Left cardiac atrium (tissue), 4 donors: ENCODE measurements at regions of chr21 and their contacts with region 1.

Region 1: GRCh38 chr21:34579411-34579810 is 35.5 kb downstream of the RCAN1 start:
- DNase-seq: no peak
- ATAC-seq: no peak

Region 2: DNA sequence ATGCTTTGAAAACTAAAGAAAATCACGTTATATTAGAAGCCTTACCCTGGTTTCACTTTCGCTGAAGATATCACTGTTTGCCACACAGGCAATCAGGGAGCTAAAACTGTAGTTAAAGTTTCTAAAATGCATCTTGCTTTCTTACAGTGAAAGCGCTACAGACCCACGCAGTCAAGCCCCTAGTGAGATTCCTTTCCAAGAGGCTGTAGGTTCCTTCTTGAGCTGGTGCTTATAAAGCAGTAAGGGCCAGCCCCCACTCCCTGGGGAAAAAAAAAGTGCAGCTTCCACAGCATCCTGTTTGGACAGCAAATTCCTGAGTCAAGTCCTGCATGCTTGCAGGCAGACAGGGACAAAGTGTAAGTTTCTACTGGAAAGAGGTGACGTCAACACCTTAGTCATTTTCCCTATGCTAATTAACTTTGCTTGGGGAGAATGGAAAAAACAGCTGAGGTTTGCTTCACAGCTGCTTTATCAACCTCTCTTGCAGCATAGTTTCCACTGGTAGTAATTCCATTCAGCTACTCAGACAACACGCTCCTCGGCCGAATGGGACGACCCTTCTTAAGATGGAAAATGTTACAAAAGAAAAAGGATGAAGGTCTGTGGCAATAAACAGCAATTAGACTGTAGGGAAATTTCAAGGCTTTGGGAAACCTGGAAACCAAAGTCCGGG is 52.7 kb before region 1 on chr21:
- intact Hi-C with region 1: loop called in 1 of 2 experiments (anchors 5 kb)
- DNase-seq: peak; percentile 84
- ATAC-seq: peak; percentile 86 to 94

Region 3: GRCh38 chr21:34536820-34537219 is 42.6 kb before region 1 on chr21:
- intact Hi-C with region 1: loop called in 1 of 2 experiments (anchors 5 kb)
- DNase-seq: no peak
- ATAC-seq: peak; percentile 51 to 63

Region 4: DNA sequence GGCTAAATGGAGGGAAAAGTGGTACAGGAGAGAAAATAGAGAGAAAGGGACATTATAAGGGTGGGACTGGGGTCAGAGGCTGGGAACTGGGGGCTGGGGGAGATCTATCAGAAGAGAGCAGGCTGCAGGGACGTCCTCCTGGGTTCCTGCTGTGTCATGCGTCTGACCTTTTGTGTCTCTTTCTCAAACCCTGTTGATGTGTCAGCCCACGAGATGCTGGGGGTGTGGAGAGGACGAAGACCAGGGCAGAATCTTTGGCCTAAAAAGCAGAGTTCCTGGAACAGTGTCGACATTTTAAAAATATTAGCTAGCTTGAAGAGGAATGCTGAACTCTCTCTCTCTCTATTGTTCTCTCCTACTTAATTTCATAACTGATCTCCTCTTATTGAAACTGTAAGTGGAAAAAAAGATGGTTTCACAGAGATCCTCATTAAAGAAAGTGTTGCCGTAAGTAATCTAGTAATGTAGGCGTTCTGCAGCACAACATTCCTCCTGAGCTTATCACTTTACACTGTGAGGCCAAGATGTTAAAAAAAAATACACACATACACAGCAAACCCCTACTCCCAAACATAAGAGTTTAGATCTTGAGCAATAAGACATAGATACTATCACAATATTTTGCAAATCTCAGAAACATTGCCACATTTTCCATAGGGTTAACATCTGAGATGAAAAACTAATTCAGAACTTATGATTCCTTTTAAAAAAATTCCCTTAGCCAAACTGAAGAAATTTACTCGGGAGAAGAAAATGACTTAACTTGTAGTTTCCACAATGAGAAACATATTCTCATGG is 417.1 kb after region 1 on chr21:
- intact Hi-C with region 1: no loop called
- DNase-seq: peak; percentile 50
- ATAC-seq: peak; percentile 42